Cardiac septum (tissue), 1 donor: ENCODE measurements at regions of chr4 and their contacts with region 1.

Region 1: DNA sequence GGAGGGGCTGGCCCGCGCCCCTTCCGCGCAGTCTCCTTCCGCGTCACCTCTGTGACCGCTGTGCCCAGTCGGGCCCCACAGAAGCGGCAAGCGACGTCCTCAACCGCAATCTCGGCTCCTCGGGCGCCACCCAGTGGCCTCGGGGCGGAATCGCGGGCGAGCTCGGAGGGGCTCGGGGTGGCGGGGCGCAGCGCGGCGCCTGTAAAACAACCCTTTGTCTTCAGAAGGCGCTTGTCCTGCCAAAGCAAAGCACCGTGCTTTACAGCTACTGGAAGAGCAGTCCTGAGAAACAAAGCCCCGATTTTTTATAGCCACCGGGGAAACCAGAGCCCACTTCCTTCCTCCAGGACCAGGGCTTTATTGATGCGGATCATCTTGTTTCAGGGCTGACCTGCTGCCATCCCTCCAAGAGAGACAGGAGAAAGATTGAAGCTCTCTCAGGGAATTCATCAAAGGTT is 37.3 kb upstream of the CDKN2AIP start:
- DNase-seq: peak; percentile 92

Region 2: GRCh38 chr4:182938205-182938645 is 468.9 kb before region 1 on chr4:
- intact Hi-C with region 1: loop called (anchors 5 kb)
- DNase-seq: peak; percentile 82

Region 3: GRCh38 chr4:183261953-183262775 is 145.0 kb before region 1 on chr4:
- intact Hi-C with region 1: loop called (anchors 10 kb)
- DNase-seq: peak; percentile 88